Endothelial cell of umbilical vein (primary cell): ENCODE measurements at regions of chrX and their contacts with region 1.

Region 1: DNA sequence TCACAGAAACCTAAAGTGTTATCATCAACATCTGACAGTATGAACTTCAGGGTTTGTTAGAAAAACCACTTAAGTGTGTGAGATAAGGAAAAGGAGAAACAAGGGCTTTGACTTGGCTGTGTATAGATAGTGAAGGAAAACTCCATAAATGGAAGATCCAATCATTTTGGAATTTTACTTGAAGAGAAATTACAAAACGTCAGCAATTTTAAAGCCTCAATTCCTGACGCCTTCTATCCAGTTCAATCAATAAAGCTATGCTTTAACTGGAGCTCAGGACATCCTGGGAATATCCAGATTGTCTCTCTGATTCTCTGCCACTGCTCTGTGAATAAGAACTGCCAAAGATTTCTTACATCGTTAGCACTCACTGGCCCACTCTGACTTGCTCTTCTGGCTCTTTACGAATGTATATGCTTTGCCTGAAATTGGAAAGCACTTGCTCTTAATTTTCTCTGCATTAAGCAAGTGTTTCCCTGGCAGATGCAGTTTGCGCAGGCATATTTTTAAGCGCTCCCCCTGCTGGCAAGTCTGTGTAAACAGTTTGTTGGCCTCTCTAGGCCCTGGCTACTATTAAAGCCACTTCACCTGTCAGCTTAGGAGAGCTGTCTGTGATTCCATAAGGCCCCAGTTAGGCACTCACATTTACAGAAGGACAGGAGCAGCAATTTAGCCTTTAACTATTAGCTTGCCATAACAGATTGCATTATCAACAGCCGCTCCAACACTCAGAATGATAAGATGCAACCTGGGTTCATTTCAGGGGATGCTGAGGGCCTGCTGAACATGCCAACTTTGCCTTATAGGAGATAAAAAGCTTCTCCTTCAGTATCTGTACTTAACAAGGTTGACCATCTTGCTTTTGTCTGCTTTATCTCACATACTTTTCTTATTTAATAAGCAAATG is 251.4 kb upstream of the DDX53 start:
- DNase-seq: peak; percentile 46
- H3K4me3 ChIP-seq: no peak overlapping the region
- H3K27ac ChIP-seq: no peak overlapping the region
- H3K4me1 ChIP-seq: no peaks in the 10 kb centered on the region
- H3K27me3 ChIP-seq: no peaks in the 10 kb centered on the region
- CTCF ChIP-seq: peak; percentile 54 to 62
- POLR2A ChIP-seq: no peak

Region 2: GRCh38 chrX:22192417-22193060 is 555.8 kb before region 1 on chrX:
- CTCF ChIA-PET with region 1: no interaction called
- POLR2A ChIA-PET with region 1: no interaction called
- dilution Hi-C with region 1: no loop called
- intact Hi-C with region 1: loop called (anchors 5 kb)
- DNase-seq: peak; percentile 46
- H3K4me3 ChIP-seq: no peak overlapping the region
- H3K27ac ChIP-seq: no peak overlapping the region
- H3K4me1 ChIP-seq: no peaks in the 10 kb centered on the region
- H3K27me3 ChIP-seq: no peaks in the 10 kb centered on the region
- CTCF ChIP-seq: peak; percentile 56
- POLR2A ChIP-seq: no peak

Region 3: DNA sequence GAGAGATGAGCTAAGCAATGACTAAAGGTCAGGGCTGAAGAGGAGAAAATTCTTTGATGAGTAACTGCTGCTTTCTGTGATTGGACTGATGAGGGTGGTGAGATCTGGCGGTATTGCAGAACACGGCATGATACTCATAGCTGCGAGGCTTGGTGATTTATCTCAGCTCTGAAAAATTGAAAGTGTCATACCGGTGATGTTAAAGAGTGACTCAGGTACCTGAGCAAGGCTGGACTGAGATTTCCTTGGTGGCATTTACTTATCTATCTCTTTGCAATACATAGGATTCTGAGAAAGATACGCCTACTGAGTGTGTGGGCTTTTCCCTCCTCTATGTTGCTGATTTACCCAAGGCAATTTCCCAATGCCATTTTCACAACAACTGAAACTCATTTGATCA is 47.4 kb after region 1 on chrX:
- CTCF ChIA-PET with region 1: no interaction called
- POLR2A ChIA-PET with region 1: no interaction called
- dilution Hi-C with region 1: no loop called
- intact Hi-C with region 1: no loop called
- DNase-seq: no peak
- H3K4me3 ChIP-seq: no peak overlapping the region
- H3K27ac ChIP-seq: no peak overlapping the region
- H3K4me1 ChIP-seq: peaks cover 2% of the 10 kb centered on the region
- H3K27me3 ChIP-seq: no peaks in the 10 kb centered on the region
- CTCF ChIP-seq: no peak
- POLR2A ChIP-seq: no peak